H1 (cell line): ENCODE measurements at regions of chr10 and their contacts with region 1.

Region 1: GRCh38 chr10:90751107-90751997 is 106.5 kb downstream of the HTR7 start:
- DNase-seq: peak in 1 of 2 experiments; percentile 79
- H3K4me3 ChIP-seq: no peak overlapping the region
- H3K27ac ChIP-seq: no peak overlapping the region
- H3K4me1 ChIP-seq: peaks cover 0 to 2% (median 0%) of the 10 kb centered on the region in 4 experiments; a peak in 2 of 7 replicates
- H3K27me3 ChIP-seq: no peaks in the 10 kb centered on the region
- CTCF ChIP-seq: peak; percentile 35 to 87 (median 73)
- EP300 ChIP-seq: no peak
- POLR2A ChIP-seq: no peak
- RAD21 ChIP-seq: peak; percentile 93 to 96

Region 2: DNA sequence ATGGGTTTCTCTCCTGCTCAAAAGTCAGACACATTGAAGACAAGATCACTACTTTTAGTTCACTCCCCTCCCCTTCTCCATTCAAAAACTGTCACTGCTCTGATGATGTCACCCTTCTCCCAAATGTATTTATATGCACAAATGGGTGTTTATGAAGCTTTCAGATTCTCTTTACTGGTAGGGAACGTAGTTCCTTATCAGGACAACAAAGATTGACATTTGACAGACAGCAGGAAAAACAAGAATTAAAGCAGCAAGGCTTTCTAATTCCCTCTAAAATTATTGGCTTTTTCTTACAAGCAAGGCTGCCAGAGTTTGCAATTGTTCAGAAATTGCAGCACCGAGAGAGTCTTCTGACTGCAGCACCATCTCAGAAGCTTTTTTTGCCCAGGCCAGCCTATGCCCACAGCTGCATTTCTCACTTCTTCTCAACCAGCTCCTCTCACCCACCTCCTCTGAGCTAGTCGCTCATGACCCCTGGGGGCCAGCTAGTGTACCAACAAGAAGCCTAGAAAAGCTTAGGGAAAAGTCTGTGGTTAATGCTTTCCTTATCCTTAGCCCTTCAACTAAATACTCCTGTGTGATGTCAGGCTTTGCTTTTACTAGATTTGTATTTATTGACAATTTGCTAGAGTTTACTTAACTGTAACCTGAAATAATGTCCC is 158.6 kb before region 1 on chr10:
- CTCF ChIA-PET with region 1: no interaction called
- POLR2A ChIA-PET with region 1: no interaction called
- DNase-seq: peak; percentile 51 to 59
- H3K4me3 ChIP-seq: no peak overlapping the region
- H3K27ac ChIP-seq: no peak overlapping the region
- H3K4me1 ChIP-seq: no peaks in the 10 kb centered on the region
- H3K27me3 ChIP-seq: no peaks in the 10 kb centered on the region
- CTCF ChIP-seq: peak; percentile 57 to 81 (median 75)
- EP300 ChIP-seq: no peak
- POLR2A ChIP-seq: no peak
- RAD21 ChIP-seq: peak; percentile 96 to 97

Region 3: DNA sequence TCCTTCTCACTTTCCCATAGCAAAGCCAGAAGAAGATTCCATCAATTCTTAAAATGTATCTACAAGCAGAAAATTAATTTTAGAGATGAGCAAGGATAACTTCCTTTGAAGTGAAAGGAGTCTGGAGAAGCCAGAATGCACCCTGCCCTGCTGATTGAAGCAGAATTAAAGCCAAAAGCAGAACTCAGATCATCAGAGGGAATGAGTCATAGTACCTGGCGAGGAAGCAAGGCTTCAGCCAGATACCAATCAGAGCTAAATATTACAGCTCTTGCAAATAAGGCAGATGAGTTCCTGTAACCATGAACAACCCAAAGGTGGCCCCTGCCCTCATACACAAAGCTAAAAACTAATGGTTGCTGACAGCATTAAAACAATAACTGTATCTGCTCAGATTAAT is 96.1 kb after region 1 on chr10:
- CTCF ChIA-PET with region 1: no interaction called
- POLR2A ChIA-PET with region 1: no interaction called
- DNase-seq: no peak
- H3K4me3 ChIP-seq: no peak overlapping the region
- H3K27ac ChIP-seq: no peak overlapping the region
- H3K4me1 ChIP-seq: peaks cover 0 to 4% (median 0%) of the 10 kb centered on the region in 4 experiments; a peak in 1 of 7 replicates
- H3K27me3 ChIP-seq: no peaks in the 10 kb centered on the region
- CTCF ChIP-seq: no peak
- EP300 ChIP-seq: no peak
- POLR2A ChIP-seq: no peak
- RAD21 ChIP-seq: no peak

Region 4: GRCh38 chr10:90857635-90858460 is 106.5 kb after region 1 on chr10 and contains the start of gene HTR7:
- CTCF ChIA-PET with region 1: interaction called, 79 read pairs
- POLR2A ChIA-PET with region 1: no interaction called
- DNase-seq: peak in 1 of 2 experiments; percentile 88
- H3K4me3 ChIP-seq: peak within 1 kb of the TSS; percentile 46 to 93 (median 79)
- H3K27ac ChIP-seq: no peak within 1 kb of the TSS; the same call in 1 of the 2 replicates
- H3K4me1 ChIP-seq: peaks cover 0 to 9% (median 2%) of the 10 kb centered on the region in 4 experiments; a peak in 3 of 7 replicates
- H3K27me3 ChIP-seq: peaks cover 1 to 14% (median 8%) of the 10 kb centered on the region in 4 experiments; a peak in 6 of 7 replicates
- CTCF ChIP-seq: peak; percentile 45 to 69 (median 55)
- EP300 ChIP-seq: no peak
- POLR2A ChIP-seq: no peak
- RAD21 ChIP-seq: peak; percentile 8 to 48; a peak in 2 of 4 replicates
- total RNA-seq, gene HTR7: 24.6 and 26.9 TPM in 2 replicates

Region 5: DNA sequence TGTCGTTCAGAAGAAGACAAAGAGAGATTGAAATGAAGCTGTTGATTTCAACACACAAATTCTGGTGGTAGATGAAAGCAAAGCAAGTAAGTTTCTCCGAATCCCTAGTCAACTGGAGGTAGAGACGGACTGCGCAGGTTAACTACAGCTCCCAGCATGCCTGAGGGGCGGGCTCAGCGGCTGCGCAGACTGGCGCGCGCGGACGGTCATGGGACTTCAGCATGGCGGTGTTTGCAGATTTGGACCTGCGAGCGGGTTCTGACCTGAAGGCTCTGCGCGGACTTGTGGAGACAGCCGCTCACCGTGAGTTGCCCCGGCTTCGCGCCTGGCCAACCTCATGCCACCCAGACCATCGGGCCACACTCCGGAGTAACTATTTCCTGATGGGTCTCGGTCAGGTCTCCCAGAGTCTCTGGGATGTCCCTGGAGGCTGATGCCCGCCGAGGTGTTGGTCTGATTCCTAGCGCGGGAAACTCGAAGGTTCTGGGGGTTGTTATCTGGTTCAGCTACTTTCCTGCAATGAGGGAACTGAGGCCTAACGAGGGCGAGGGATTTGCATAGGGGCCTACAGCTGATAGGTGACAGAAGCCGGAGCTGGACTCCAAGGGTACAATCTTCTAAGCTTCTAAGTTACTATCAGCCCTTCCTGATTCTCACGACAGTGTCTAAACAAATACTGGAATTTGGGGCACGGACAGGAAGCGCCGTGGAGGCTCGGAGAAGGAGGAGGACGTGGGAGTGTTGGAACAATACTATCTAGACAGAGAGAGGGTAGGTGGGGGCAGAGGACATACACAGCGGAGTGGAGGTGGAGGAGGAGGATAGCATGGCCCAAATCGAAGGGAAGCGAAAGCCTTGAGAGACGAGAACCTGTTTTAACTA is 120.7 kb after region 1 on chr10 and contains the start of gene RPP30:
- CTCF ChIA-PET with region 1: interaction called, 20 read pairs
- POLR2A ChIA-PET with region 1: interaction called, 3 read pairs
- DNase-seq: peak in 1 of 2 experiments; percentile 88
- H3K4me3 ChIP-seq: peak within 1 kb of the TSS; percentile 90 to 99 (median 96)
- H3K27ac ChIP-seq: peak within 1 kb of the TSS; percentile 80
- H3K4me1 ChIP-seq: peaks cover 0 to 5% (median 2%) of the 10 kb centered on the region in 4 experiments; a peak in 4 of 7 replicates
- H3K27me3 ChIP-seq: no peaks in the 10 kb centered on the region
- CTCF ChIP-seq: 0 out of 4 replicates have a peak, but pooled peaks of 1 of the 3 experiments have one; percentile 0
- EP300 ChIP-seq: no peak
- POLR2A ChIP-seq: peak; percentile 50 to 80
- RAD21 ChIP-seq: no peak
- total RNA-seq, gene RPP30: 76.7 and 79.7 TPM in 2 replicates